Common myeloid progenitor, CD34-positive (primary cell): ENCODE measurements at regions of chr1 and their contacts with region 1.

Region 1: GRCh38 chr1:1185101-1185765 is 11.6 kb downstream of the TTLL10 start:
- DNase-seq: no peak
- H3K4me3 ChIP-seq: no peak overlapping the region
- H3K27ac ChIP-seq: no peak overlapping the region
- H3K4me1 ChIP-seq: peaks cover 0 to 41% (median 25%) of the 10 kb centered on the region in 4 experiments
- H3K27me3 ChIP-seq: no peaks in the 10 kb centered on the region

Region 2: DNA sequence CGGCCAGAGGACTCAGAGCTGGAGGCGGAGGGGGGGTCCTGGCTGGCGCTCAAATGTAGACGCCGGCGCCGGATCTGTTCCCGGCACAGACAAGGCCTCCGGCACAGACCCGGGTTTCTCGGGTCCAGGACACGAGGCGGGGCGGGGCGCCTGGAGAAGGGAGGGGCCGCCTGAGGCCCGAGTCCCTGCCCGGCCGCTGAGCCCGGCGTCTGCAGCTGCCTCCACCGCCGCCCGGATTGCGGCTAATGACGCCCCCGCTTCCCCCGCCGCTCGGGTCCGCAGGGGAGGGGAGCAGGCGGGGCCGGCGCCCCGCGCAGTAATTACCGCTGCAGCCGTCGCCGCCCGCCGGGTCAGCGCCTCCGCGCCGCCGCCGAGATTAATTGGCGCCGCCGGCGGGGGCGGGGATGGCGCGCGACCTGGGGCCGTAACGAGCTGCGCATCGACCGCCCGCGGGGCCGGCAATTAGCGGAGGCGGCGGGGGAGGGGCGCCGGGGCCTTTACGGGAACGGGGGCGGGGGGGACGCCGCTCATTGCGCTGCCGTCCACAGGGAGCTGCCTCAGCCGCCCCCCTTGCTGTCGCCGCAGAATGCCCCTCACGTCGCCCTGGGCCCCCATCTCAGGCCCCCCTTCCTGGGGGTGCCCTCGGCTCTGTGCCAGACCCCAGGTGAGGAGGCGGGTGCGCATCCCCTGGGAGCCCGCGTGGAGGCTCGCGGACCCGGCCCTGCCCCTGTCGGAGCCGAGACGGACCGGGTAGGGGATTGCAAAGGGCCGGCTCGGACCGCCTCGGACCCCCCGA is 243.4 kb before region 1 on chr1:
- CTCF ChIA-PET with region 1: no interaction called
- POLR2A ChIA-PET with region 1: no interaction called
- DNase-seq: peak in 2 of 3 donors; percentile 51 to 64
- H3K4me3 ChIP-seq: peak overlapping the region in 5 of 7 experiments; percentile 13 to 61 (median 26)
- H3K27ac ChIP-seq: no peak overlapping the region
- H3K4me1 ChIP-seq: peaks cover 0 to 40% (median 33%) of the 10 kb centered on the region in 4 experiments
- H3K27me3 ChIP-seq: peaks cover 0 to 67% (median 18%) of the 10 kb centered on the region in 5 experiments

Region 3: GRCh38 chr1:1200851-1201810 is 15.9 kb after region 1 on chr1:
- CTCF ChIA-PET with region 1: interaction called, 12 read pairs
- POLR2A ChIA-PET with region 1: no interaction called
- DNase-seq: peak; percentile 68 to 81 (median 73)
- H3K4me3 ChIP-seq: peak overlapping the region; percentile 19 to 55 (median 51)
- H3K27ac ChIP-seq: peak overlapping the region in 1 of 2 experiments; percentile 25
- H3K4me1 ChIP-seq: peaks cover 0 to 61% (median 35%) of the 10 kb centered on the region in 4 experiments
- H3K27me3 ChIP-seq: peaks cover 0 to 8% (median 0%) of the 10 kb centered on the region in 5 experiments